Activated naive CD4-positive, alpha-beta T cell treated with anti-CD3 and anti-CD28 coated beads, Interleukin-2, amount 10 ng/mL, durations not matched to agents 7 days and 5 days (primary cell): ENCODE measurements at regions of chr15 and their contacts with region 1.

Region 1: GRCh38 chr15:73927476-73928240 is 1.4 kb downstream of the LOXL1 start:
- DNase-seq: peak; percentile 85
- H3K4me3 Mint-ChIP-seq: peak overlapping the region; percentile 67
- H3K27ac Mint-ChIP-seq: no peak overlapping the region
- H3K4me1 Mint-ChIP-seq: peaks cover 57% of the 10 kb centered on the region
- H3K27me3 Mint-ChIP-seq: peaks cover 50% of the 10 kb centered on the region

Region 2: GRCh38 chr15:73495171-73495570 is 432.5 kb before region 1 on chr15:
- CTCF ChIA-PET with region 1: no interaction called
- DNase-seq: no peak
- H3K4me3 Mint-ChIP-seq: no peak overlapping the region
- H3K27ac Mint-ChIP-seq: no peak overlapping the region
- H3K4me1 Mint-ChIP-seq: no peaks in the 10 kb centered on the region
- H3K27me3 Mint-ChIP-seq: no peaks in the 10 kb centered on the region

Region 3: DNA sequence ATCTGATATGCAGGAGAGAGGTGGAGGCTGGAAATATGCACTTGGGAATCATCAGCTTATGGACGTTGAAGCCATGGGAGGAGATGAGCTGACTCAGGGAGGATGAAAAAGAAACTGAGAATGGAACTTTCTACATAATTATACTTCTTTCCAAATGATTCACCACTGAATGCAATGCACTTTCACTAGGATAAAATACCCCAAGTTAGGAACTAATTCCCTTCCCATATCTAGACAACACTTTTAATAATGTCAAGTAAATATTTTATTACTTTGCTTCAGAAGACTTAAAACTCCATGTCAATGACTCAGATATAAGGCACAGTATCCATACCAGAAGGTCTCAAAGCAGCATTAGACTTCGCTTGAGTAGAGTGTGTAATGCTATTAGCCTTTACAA is 318.7 kb before region 1 on chr15:
- CTCF ChIA-PET with region 1: no interaction called
- DNase-seq: no peak
- H3K4me3 Mint-ChIP-seq: no peak overlapping the region
- H3K27ac Mint-ChIP-seq: no peak overlapping the region
- H3K4me1 Mint-ChIP-seq: peaks cover 15% of the 10 kb centered on the region
- H3K27me3 Mint-ChIP-seq: no peaks in the 10 kb centered on the region

Region 4: DNA sequence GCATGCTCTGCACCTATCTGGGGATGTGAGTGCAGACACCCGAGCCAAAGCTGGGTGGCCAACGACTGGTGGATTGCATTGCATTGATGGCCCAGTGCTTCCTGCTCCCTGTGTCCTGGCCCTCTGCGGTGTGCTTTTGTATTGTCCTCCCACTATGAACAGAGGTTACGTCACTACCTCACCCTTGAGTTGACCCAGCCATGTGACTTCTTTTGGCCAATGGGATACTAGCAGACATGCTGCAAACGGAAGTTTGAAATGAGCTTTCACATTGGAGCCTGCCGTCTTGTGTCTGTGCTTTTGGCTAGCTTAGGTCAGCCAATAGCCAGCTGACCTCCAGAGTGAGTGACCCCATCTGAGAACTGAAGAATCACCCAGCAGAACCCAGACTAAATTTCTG is 69.6 kb before region 1 on chr15:
- CTCF ChIA-PET with region 1: no interaction called
- DNase-seq: no peak
- H3K4me3 Mint-ChIP-seq: no peak overlapping the region
- H3K27ac Mint-ChIP-seq: no peak overlapping the region
- H3K4me1 Mint-ChIP-seq: no peaks in the 10 kb centered on the region
- H3K27me3 Mint-ChIP-seq: peaks cover 51% of the 10 kb centered on the region

Region 5: GRCh38 chr15:73873889-73874511 is 53.7 kb before region 1 on chr15:
- CTCF ChIA-PET with region 1: interaction called, 14 read pairs
- DNase-seq: peak; percentile 56
- H3K4me3 Mint-ChIP-seq: no peak overlapping the region
- H3K27ac Mint-ChIP-seq: no peak overlapping the region
- H3K4me1 Mint-ChIP-seq: no peaks in the 10 kb centered on the region
- H3K27me3 Mint-ChIP-seq: peaks cover 57% of the 10 kb centered on the region

Region 6: DNA sequence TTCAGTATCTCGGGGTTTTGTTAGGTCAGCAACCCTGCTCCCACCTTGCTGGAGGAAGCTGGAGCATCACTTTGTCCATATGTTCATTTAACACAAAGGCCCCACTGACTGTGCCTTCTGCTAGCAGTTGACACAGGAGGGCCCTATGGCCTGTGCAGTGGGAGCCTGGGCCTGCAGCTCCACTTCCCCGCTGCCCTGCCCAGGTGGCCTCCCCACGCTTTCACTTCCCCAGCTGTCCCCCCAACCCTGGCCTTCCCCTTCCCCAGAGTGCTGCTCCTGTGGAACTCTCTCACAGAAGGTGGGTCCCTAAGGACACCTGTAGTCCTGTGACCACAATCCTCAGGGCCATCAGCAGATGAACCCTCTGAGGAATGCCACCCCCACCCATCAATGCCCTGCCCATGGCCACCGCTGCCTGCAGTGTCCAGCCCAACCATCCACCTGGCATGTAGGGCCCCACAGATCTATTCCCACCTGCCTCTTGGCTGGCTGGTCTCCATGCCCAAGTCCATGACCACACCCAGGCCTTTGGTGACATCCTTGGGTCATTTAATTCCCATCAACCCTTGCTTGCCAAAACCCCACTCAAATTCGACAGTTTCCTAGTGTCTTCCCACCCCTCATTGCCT is 40.8 kb before region 1 on chr15:
- CTCF ChIA-PET with region 1: no interaction called
- DNase-seq: no peak
- H3K4me3 Mint-ChIP-seq: no peak overlapping the region
- H3K27ac Mint-ChIP-seq: no peak overlapping the region
- H3K4me1 Mint-ChIP-seq: no peaks in the 10 kb centered on the region
- H3K27me3 Mint-ChIP-seq: peaks cover 52% of the 10 kb centered on the region

Region 7: GRCh38 chr15:73897441-73898261 is 30.0 kb before region 1 on chr15:
- CTCF ChIA-PET with region 1: interaction called, 32 read pairs
- DNase-seq: peak; percentile 77
- H3K4me3 Mint-ChIP-seq: no peak overlapping the region
- H3K27ac Mint-ChIP-seq: no peak overlapping the region
- H3K4me1 Mint-ChIP-seq: peaks cover 4% of the 10 kb centered on the region
- H3K27me3 Mint-ChIP-seq: peaks cover 20% of the 10 kb centered on the region

Region 8: DNA sequence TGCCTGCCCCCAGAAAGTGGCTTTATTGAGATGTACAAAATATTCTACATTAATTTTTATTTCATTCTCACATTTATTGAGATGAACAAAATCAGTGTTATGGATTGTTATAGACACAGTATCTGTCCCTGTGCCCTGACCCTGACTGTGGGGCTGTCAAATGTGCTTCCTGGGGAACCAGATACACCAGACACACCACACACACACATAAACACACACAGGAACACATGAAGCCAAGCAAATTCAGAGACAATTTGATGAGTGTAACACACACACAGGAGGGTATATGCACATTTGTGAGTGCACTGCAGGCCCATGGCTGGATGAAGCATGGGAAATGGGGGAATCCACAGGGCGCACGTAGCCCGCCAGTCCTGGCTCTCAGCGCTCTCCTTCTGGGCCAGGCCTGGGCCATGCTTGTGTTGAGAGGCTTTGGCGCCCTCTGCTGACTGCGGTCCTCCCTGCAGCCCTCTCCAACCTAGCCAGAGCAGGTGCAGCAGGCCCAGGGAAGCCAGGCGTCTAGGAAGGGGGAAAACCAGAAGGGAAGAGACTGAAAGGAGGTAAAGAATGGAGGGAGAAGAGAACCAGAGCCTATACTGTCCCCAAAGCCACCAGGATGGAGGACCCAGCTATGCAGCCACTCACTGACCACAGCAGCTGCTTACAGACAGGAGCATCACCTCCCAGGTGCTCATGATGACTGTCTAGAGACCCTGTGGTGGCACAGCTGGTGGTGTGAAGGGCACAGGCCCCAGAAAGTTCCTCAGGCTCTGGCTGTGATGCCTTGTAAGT is 19.4 kb before region 1 on chr15:
- CTCF ChIA-PET with region 1: interaction called, 34 read pairs
- DNase-seq: peak; percentile 86
- H3K4me3 Mint-ChIP-seq: no peak overlapping the region
- H3K27ac Mint-ChIP-seq: no peak overlapping the region
- H3K4me1 Mint-ChIP-seq: peaks cover 14% of the 10 kb centered on the region
- H3K27me3 Mint-ChIP-seq: peaks cover 7% of the 10 kb centered on the region

Region 9: GRCh38 chr15:73914145-73914544 is 13.5 kb before region 1 on chr15:
- CTCF ChIA-PET with region 1: interaction called, 34 read pairs
- DNase-seq: peak; percentile 37
- H3K4me3 Mint-ChIP-seq: peak overlapping the region; percentile 13
- H3K27ac Mint-ChIP-seq: no peak overlapping the region
- H3K4me1 Mint-ChIP-seq: peaks cover 30% of the 10 kb centered on the region
- H3K27me3 Mint-ChIP-seq: peaks cover 6% of the 10 kb centered on the region

Region 10: DNA sequence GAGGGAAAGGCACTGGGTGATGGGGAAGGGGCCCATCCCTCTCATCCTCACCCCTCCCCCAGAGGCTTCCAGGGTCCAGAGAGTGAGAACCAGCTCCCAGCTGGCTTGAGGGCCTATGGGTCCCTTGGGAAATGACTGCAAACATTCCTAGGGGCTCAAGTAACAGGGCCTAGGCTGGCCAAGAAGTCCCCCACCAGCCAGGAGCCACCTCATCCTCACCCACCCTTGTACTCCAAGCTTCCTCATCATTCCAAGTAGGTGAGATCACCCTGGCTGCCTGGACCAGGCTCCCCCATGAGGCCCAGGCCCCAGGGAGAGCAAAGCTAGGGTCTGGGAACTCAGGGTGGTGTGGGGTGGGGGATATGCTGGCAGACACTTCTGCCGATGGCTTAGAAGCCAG is 13.4 kb after region 1 on chr15:
- CTCF ChIA-PET with region 1: interaction called, 15 read pairs
- DNase-seq: no peak
- H3K4me3 Mint-ChIP-seq: no peak overlapping the region
- H3K27ac Mint-ChIP-seq: no peak overlapping the region
- H3K4me1 Mint-ChIP-seq: peaks cover 17% of the 10 kb centered on the region
- H3K27me3 Mint-ChIP-seq: peaks cover 45% of the 10 kb centered on the region

Region 11: GRCh38 chr15:73950831-73951561 is 23.3 kb after region 1 on chr15:
- CTCF ChIA-PET with region 1: interaction called, 11 read pairs
- DNase-seq: peak; percentile 87
- H3K4me3 Mint-ChIP-seq: no peak overlapping the region
- H3K27ac Mint-ChIP-seq: no peak overlapping the region
- H3K4me1 Mint-ChIP-seq: peaks cover 15% of the 10 kb centered on the region
- H3K27me3 Mint-ChIP-seq: peaks cover 49% of the 10 kb centered on the region